Mammary epithelial cell (primary cell): ENCODE measurements at regions of chr2 and their contacts with region 1.

Region 1: GRCh38 chr2:121429119-121429903 is 101.4 kb upstream of the RNU4ATAC start:
- DNase-seq: no peak
- H3K4me3 ChIP-seq: no peak overlapping the region
- H3K27ac ChIP-seq: no peak overlapping the region
- H3K4me1 ChIP-seq: peaks cover 4% of the 10 kb centered on the region
- H3K27me3 ChIP-seq: no peaks in the 10 kb centered on the region
- CTCF ChIP-seq: no peak

Region 2: DNA sequence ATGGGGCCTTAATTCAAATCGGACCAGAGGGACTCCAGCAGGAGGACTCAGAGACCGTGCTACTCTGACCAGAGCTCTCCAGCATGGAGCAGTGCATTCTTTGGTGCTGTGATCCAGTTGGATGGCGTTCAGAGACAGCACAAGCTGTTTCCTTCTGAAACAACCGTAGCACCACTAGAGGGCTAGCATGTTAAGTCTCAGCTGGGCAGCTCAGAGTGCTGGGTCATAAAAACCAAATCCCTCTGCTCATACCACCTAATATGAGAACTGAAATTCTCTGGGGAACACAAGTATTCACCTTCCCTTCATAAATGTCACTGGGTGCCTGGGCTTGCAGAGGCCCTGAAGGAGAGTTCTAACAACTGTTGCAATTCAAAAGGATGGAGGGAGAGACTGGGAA is 46.6 kb before region 1 on chr2:
- CTCF ChIA-PET with region 1: no interaction called
- dilution Hi-C with region 1: no loop called
- in situ Hi-C with region 1: no loop called
- intact Hi-C with region 1: no loop called
- DNase-seq: no peak
- H3K4me3 ChIP-seq: no peak overlapping the region
- H3K27ac ChIP-seq: no peak overlapping the region
- H3K4me1 ChIP-seq: peaks cover 21% of the 10 kb centered on the region
- H3K27me3 ChIP-seq: no peaks in the 10 kb centered on the region
- CTCF ChIP-seq: peak; percentile 6 to 8

Region 3: GRCh38 chr2:121446647-121447241 is 17.4 kb after region 1 on chr2:
- CTCF ChIA-PET with region 1: interaction called, 16 read pairs
- dilution Hi-C with region 1: no loop called
- in situ Hi-C with region 1: no loop called
- intact Hi-C with region 1: no loop called
- DNase-seq: peak; percentile 17
- H3K4me3 ChIP-seq: no peak overlapping the region
- H3K27ac ChIP-seq: no peak overlapping the region
- H3K4me1 ChIP-seq: no peaks in the 10 kb centered on the region
- H3K27me3 ChIP-seq: no peaks in the 10 kb centered on the region
- CTCF ChIP-seq: no peak